ENCODE measurements at regions of chr12 and their contacts with region 1.

Region 1: GRCh38 chr12:46303039-46303666 is 34.3 kb upstream of the SLC38A1 start:
- DNase-seq: no peak
- ATAC-seq: peak; percentile 68

Region 2: GRCh38 chr12:45878630-45879255 is 424.4 kb before region 1 on chr12:
- intact Hi-C with region 1: no loop called
- DNase-seq: no peak
- ATAC-seq: no peak

Region 3: GRCh38 chr12:46153268-46153872 is 149.8 kb before region 1 on chr12:
- intact Hi-C with region 1: loop called (anchors 10 kb)
- DNase-seq: no peak
- ATAC-seq: no peak

Region 4: GRCh38 chr12:46404225-46404631 is 101.1 kb after region 1 on chr12:
- intact Hi-C with region 1: no loop called
- DNase-seq: no peak
- ATAC-seq: no peak

Region 5: DNA sequence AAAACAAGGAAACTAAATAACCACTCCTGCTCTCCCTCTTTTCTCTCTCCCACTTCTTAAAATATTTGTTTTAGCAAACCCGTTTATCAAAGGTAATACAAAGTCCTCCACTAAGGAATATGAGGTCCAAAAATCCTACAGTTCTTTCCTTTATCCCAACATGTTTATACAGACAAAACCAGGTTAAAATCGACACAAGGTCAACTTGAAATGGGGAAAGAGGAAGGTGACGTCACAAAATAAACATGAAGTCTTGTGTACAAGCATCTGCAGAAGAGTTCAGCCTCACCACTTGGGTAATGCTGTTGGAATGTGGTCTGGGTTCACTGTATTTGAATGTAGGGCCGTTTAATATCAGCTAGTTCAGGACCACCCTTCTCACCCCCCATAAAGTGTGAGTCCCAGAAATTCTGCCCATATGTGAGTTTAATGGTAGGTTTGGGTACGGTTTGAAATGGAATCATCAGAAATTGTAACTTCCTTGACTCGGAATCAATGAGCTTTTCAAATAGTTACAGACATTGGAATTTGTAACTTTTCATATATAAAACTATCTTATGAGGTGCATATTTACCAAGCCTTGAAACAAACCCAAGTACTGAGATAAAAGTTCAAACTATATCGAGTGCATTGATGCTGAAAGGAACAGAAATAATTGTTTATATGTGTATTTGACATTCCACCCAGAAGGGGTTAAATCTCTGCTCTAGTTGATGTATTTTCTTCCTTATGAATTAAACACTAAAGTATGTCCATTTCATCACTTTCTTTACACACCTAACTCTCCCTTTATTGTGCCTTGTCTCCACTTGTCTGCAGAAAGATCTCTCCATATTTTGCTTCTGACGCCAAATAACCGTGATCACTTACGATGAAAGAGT is 189.6 kb after region 1 on chr12:
- intact Hi-C with region 1: no loop called
- DNase-seq: no peak
- ATAC-seq: no peak

Region 6: GRCh38 chr12:46763230-46763629 is 460.1 kb after region 1 on chr12:
- intact Hi-C with region 1: no loop called
- DNase-seq: no peak
- ATAC-seq: no peak

Measured in Right ventricle myocardium superior (tissue), 1 donor.